GM12878 (cell line): ENCODE measurements at regions of chr4 and their contacts with region 1.

Region 1: DNA sequence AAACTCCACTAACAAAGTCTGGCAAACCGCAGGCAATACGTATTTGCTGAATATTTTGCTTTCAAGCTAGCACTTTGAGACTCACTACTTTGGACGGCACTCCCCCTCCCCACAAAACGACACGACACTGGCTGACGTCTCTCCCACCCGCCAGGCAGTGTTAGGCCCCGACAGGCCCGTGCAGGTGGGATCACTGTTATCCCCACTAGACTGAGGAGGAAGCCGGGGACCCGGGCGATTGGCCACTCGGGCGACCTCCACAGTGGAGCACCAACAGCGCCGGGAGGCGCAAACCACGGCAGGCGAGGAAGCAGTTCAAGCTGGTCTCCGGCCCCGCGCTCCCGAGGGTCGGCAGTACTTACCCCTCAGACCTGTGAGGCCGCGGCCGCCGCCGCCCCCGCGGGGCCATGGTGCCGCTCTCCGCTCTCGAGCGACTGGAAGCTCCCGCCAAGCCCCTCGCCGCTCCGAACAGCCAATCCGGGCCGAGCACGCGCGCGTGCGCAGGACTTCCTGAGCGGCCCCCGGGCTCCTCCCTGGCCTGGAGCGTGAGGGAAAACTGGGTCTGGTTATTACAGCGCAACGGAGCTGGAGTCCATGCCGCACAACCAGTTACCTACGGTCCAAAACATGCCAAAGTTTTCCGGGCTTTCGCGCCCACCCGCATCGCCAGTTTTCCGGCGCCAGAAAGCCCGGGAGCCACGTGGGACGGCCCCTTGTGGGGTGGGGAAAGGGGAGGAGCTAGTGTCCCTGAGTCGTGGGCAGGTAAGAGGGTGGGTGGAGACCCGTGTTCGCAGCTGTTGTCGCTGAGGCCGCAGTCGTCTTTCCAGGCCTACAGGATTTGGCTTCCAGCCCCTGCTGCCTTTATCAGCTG is at the start of gene CENPU:
- DNase-seq: peak; percentile 94
- ATAC-seq: peak; percentile 93
- H3K4me3 ChIP-seq: peak within 1 kb of the TSS; percentile 91
- H3K27ac ChIP-seq: peak within 1 kb of the TSS; percentile 81
- H3K4me1 ChIP-seq: peaks cover 9% of the 10 kb centered on the region
- H3K27me3 ChIP-seq: no peaks in the 10 kb centered on the region
- CTCF ChIP-seq: no peak
- EP300 ChIP-seq: no peak
- POLR2A ChIP-seq: peak; percentile 91
- RAD21 ChIP-seq: 0 out of 2 replicates have a peak, but pooled peaks have one; percentile 22
- polyA plus RNA-seq, gene CENPU: 26.6 to 46.5 TPM

Region 2: DNA sequence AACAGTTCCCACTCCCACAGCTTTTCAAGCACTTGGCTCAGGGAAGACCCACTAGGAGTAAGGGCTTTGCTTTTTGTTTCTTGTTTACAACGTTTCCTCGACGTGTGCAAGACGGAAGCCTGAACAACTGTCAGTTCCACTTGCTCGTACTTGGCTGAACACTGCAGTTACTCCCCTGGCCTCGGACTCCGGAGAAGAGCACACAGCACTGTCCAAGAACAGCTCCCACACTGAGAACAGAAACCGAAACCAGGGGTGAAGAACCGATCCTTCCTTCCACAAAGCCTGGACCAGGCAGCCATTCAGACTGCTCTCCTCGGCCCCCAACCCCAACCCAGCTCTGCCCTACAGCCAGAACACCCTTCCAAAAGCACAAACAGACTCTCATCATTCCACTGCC is 285.1 kb before region 1 on chr4:
- CTCF ChIA-PET with region 1: no interaction called
- POLR2A ChIA-PET with region 1: no interaction called
- RAD21 ChIA-PET with region 1: no interaction called
- SMC1A ChIA-PET with region 1: no interaction called
- in situ Hi-C with region 1: no loop called
- intact Hi-C with region 1: no loop called
- DNase-seq: no peak
- ATAC-seq: peak; percentile 59
- H3K4me3 ChIP-seq: 0 out of 2 replicates have a peak overlapping the region, but pooled peaks have one; percentile 21
- H3K27ac ChIP-seq: peak overlapping the region; percentile 27
- H3K4me1 ChIP-seq: peaks cover 49% of the 10 kb centered on the region
- H3K27me3 ChIP-seq: no peaks in the 10 kb centered on the region
- CTCF ChIP-seq: no peak
- EP300 ChIP-seq: no peak
- POLR2A ChIP-seq: no peak
- RAD21 ChIP-seq: no peak

Region 3: GRCh38 chr4:184722798-184723197 is 11.1 kb before region 1 on chr4:
- CTCF ChIA-PET with region 1: interaction called, 9 read pairs
- POLR2A ChIA-PET with region 1: interaction called, 5 read pairs
- RAD21 ChIA-PET with region 1: interaction called, 23 read pairs
- SMC1A ChIA-PET with region 1: interaction called, 5 read pairs
- in situ Hi-C with region 1: no loop called
- intact Hi-C with region 1: no loop called
- DNase-seq: no peak
- ATAC-seq: peak; percentile 60
- H3K4me3 ChIP-seq: no peak overlapping the region
- H3K27ac ChIP-seq: no peak overlapping the region
- H3K4me1 ChIP-seq: no peaks in the 10 kb centered on the region; the same call in 1 of the 2 replicates
- H3K27me3 ChIP-seq: no peaks in the 10 kb centered on the region
- CTCF ChIP-seq: peak in 2 of 3 experiments; percentile 18 to 19; a peak in 2 of 6 replicates
- EP300 ChIP-seq: no peak
- POLR2A ChIP-seq: no peak
- RAD21 ChIP-seq: no peak

Region 4: DNA sequence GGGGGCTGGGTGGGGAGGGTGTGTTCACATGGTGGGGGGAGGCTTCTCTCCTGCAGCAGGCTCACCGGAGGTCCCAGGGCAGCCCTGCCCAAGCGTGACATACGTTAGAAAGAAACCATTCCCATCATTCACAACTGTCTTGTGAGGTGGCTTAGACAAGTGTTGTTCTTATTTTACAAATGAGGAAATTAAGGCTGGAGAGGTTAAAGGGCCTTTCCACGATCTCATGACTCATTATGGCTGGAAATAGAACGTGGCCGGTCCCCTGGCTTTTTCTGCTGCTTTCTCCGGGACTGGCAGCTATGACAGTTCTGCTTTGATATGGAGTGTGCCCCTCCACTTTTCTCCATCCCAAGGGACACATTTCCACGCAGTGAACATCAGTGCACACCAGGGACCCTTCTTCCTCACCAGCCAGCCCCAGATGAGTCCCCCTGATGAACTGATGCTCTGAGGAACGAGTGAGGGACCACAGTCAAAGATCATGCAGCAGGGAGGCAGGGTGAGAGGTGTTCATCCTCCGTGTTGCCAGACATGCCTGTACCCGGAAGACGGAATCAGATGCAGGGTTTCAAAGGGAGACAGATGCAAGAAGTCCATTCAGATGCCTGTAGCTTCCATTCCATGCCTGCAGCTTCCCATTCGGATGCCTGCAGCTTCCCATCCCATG is 155.9 kb after region 1 on chr4:
- CTCF ChIA-PET with region 1: no interaction called
- POLR2A ChIA-PET with region 1: no interaction called
- RAD21 ChIA-PET with region 1: no interaction called
- SMC1A ChIA-PET with region 1: no interaction called
- in situ Hi-C with region 1: no loop called
- intact Hi-C with region 1: no loop called
- DNase-seq: no peak
- ATAC-seq: peak; percentile 46
- H3K4me3 ChIP-seq: no peak overlapping the region
- H3K27ac ChIP-seq: no peak overlapping the region
- H3K4me1 ChIP-seq: peaks cover 4% of the 10 kb centered on the region; the same call in 1 of the 2 replicates
- H3K27me3 ChIP-seq: no peaks in the 10 kb centered on the region
- CTCF ChIP-seq: no peak
- EP300 ChIP-seq: no peak
- POLR2A ChIP-seq: no peak
- RAD21 ChIP-seq: no peak